ENCODE measurements at regions of chr9 and their contacts with region 1.

Region 1: DNA sequence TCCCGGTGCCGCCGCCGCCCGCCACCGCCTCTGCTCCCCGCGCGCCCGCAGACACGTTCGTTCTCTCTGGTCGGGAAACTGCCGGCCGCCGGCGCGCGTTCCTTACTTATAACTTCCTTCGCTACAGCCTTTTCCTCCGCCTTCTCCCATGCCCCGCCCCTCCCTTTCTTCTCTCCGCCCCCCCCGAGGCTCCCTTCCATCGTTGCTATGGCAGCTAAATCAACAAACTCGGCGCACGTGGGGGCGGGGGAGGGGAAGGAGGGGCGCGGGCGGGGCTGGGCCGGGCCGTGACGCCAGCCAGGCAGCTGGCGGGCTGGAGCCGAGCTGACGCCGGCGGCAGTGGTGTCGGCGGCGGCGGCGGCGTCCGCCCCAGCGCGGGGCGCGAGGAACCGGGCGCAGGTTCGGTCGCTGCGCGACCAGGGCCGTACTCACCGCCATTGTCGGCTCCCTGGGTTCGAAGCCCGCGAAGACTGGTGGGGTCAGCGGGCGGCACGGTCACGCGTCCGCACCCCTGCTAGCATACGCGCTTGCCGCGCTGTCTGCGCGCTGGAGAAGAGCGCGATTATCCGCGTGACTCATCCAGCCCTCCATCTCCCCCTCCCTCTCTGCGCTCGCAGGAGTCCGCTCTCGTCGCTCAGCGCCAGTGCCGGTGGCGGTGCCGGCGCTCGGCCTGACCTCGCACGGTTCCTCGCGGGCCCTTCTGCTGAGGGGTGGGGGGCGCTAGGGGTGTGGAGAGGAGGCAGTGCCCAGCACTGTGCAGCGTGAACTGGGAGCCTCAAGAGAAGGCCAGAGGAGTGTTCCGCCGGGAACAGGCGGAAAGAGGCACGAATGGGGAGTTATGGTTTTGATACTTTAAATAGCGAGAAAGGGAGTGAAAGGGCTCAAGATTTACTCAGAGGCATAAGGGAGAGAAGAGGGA is at the start of gene KLF4:
- DNase-seq: peak; percentile 97
- H3K4me3 ChIP-seq: peak within 1 kb of the TSS; percentile 82
- H3K27ac ChIP-seq: peak within 1 kb of the TSS; percentile 94
- H3K4me1 ChIP-seq: peaks cover 24% of the 10 kb centered on the region
- H3K27me3 ChIP-seq: no peaks in the 10 kb centered on the region
- total RNA-seq, gene KLF4: 28.7 and 38.6 TPM in 2 replicates

Region 2: DNA sequence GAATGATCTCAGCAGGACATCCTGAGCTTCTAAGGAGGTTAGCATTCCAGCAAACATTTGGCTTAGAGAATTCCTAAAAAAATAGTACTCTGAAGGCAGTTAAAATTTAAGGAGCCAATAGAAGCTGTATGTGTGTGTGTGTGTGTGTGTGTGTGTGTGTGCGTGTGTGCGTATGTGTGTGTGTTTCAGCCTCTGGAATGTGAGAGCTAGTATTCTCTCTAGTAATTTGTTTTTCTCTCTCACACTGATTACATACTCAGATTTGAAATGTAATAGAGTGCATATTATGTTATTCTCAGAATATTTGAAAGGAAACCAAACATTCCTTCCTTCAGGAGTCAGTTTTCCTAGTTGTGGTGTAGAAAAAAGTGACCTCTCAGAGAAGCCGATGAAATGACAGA is 1516.0 kb before region 1 on chr9:
- in situ Hi-C with region 1: no loop called
- DNase-seq: peak; percentile 18
- H3K4me3 ChIP-seq: no peak overlapping the region
- H3K27ac ChIP-seq: no peak overlapping the region
- H3K4me1 ChIP-seq: no peaks in the 10 kb centered on the region
- H3K27me3 ChIP-seq: no peaks in the 10 kb centered on the region

Region 3: GRCh38 chr9:107425101-107426045 is 64.6 kb before region 1 on chr9:
- in situ Hi-C with region 1: loop called (anchors 10 kb)
- DNase-seq: peak; percentile 81
- H3K4me3 ChIP-seq: peak overlapping the region; percentile 44
- H3K27ac ChIP-seq: no peak overlapping the region
- H3K4me1 ChIP-seq: no peaks in the 10 kb centered on the region
- H3K27me3 ChIP-seq: no peaks in the 10 kb centered on the region

Region 4: DNA sequence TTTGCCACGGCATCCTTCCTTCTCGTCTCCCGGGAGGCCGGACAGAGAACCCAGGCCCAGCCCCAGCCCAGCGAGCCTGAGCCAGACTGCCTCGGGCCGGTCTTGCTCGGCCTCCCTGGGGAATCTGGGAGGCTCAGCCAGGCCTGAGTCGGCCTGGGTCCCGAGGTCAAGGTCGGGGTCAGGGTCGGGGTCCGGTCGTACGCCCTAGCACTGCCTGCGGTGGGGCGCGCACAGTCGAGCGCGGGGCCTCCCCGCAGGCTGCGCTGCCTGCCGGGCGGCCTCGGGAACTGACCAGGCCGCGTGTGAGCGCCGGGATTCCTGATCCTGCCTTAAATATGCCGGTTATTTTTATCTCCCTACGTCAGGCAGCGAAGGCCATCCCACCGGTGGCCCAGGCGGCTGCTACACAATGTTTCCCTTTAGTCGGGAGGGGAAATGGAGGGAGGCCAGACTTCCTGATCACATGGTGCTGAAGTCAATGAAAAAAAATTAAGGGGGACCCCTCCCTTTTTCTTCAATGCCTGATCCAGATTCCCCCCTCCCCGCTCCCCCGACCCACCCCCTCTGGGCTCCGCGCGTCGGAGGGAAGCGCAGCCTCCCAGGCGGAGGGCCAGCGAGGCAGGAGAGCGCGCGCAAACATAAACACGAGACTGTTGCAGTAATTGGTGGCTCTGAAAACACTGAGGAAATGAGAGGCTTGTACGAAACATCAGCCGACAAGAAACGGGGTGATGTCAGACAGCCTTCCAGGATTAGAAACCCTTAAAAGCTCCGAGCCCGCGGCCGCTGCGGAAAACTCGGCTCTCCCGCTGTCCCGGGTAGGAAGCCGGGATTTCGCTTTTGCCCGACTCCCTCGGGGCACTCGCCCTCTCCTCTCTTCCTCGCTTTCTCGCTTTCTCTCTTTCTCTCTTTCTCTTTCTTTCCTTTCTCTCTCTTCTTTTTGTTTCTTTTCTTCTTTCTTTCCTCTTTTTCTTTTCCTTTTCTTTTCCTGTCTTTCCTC is 147.8 kb after region 1 on chr9:
- in situ Hi-C with region 1: loop called (anchors 5 kb)
- DNase-seq: peak; percentile 98
- H3K4me3 ChIP-seq: peak overlapping the region; percentile 89
- H3K27ac ChIP-seq: peak overlapping the region; percentile 99
- H3K4me1 ChIP-seq: peaks cover 38% of the 10 kb centered on the region
- H3K27me3 ChIP-seq: no peaks in the 10 kb centered on the region

Region 5: GRCh38 chr9:107749787-107750444 is 260.0 kb after region 1 on chr9:
- in situ Hi-C with region 1: loop called (anchors 25 kb)
- DNase-seq: peak; percentile 97
- H3K4me3 ChIP-seq: no peak overlapping the region
- H3K27ac ChIP-seq: peak overlapping the region; percentile 92
- H3K4me1 ChIP-seq: peaks cover 36% of the 10 kb centered on the region
- H3K27me3 ChIP-seq: no peaks in the 10 kb centered on the region

Region 6: DNA sequence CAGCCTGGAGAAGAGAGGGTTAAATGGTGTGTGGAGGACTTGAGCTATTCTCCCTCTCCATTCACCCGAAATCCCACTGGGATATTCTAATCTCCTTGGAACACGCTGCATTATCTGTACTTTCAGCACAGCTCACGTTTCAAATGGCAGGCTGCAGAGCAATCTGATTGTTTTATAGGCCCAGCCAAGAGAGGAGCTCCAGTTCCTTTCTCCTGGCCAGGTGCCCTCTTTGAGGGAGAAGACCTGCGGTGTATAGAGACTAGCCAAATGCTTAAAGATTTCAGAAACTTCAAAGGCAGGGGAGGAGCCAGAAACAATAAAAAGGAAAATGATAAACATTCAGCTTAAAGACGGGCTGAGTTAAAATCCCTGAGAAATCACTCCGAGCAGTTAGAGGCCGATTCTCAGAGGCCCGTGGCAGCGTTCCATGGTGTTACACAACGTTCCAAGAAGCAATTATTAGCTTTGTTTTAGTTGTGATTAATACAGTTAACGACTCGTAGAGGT is 563.7 kb after region 1 on chr9:
- in situ Hi-C with region 1: loop called (anchors 25 kb)
- DNase-seq: peak; percentile 89
- H3K4me3 ChIP-seq: peak overlapping the region; percentile 17; the same call in 1 of the 2 replicates
- H3K27ac ChIP-seq: peak overlapping the region; percentile 65
- H3K4me1 ChIP-seq: peaks cover 61% of the 10 kb centered on the region
- H3K27me3 ChIP-seq: no peaks in the 10 kb centered on the region

Region 7: GRCh38 chr9:108272349-108272899 is 782.5 kb after region 1 on chr9:
- in situ Hi-C with region 1: loop called (anchors 5 kb)
- DNase-seq: peak; percentile 74
- H3K4me3 ChIP-seq: peak overlapping the region; percentile 47
- H3K27ac ChIP-seq: peak overlapping the region; percentile 10; the same call in 1 of the 2 replicates
- H3K4me1 ChIP-seq: peaks cover 14% of the 10 kb centered on the region
- H3K27me3 ChIP-seq: no peaks in the 10 kb centered on the region

Region 8: DNA sequence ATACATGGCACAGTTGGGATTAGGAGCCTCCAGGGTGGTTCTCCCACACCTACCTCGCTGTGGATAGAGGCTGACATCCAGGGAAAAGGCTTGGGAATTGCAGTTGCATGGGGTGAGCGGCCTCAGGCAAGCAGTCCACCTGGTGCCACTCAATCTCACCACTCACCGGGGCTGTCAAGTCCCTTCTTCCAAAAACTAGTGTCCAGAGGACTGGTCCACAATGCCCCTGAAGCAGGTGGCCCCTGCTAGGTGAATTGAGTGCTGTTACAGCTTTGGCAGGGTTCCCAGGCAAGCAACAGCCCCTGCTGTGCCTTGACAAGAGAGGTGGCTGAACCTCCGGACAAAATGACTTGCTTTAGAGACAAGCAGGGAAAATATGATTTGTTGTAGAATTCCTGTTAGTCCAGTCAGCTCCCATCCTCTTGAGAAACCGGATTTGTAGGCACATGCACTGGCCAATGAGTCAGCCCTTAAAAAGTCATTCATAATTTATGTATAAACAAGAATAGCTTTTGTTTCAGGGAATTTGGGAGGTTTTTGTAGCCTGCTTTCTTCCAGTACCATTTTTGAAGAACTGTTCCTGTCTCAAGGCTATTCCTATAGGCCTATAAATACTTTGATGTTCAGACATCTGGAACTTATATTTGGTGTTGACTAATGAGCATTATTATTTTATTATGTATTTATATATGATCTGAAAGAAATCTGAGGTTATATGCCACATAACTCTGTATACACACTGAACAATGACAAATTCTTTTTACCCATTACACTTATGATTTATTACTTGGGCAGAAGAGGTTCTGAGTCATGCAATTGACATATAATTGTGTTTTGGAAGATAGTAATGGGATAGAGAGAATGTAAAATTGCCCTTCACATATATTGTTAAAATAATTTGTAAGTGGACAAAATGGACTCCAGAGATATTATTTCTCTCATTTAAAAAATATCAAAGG is 954.7 kb after region 1 on chr9:
- in situ Hi-C with region 1: loop called (anchors 25 kb)
- DNase-seq: peak; percentile 97
- H3K4me3 ChIP-seq: peak overlapping the region; percentile 63
- H3K27ac ChIP-seq: peak overlapping the region; percentile 82
- H3K4me1 ChIP-seq: peaks cover 54% of the 10 kb centered on the region
- H3K27me3 ChIP-seq: no peaks in the 10 kb centered on the region

Measured in GM23248 (cell line).